Endothelial cell of umbilical vein (primary cell): ENCODE measurements at regions of chr2 and their contacts with region 1.

Region 1: GRCh38 chr2:174667379-174667781 is 69.8 kb upstream of the WIPF1 start:
- DNase-seq: peak; percentile 37
- H3K4me3 ChIP-seq: no peak overlapping the region
- H3K27ac ChIP-seq: no peak overlapping the region
- H3K4me1 ChIP-seq: peaks cover 14% of the 10 kb centered on the region
- H3K27me3 ChIP-seq: no peaks in the 10 kb centered on the region
- CTCF ChIP-seq: no peak
- POLR2A ChIP-seq: no peak

Region 2: DNA sequence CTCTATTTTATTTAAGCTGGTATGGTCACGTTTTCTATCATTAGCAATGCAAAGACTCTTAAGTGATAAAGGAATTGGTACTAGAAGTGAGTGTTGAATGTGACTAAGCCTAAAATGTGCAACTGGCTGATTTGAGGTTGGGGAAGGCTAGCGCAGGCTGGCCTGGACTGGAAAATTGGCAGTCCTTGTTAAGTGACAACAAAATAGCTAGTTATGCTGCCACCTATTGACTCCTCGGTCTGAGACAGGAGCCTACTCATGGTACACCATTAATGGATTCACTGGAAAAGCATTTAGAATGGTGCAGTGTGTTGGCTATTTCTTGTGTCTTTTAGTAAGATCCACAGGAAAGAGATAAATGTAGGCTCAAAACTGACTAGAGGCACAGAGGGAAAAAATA is 64.1 kb before region 1 on chr2:
- CTCF ChIA-PET with region 1: no interaction called
- POLR2A ChIA-PET with region 1: no interaction called
- dilution Hi-C with region 1: no loop called
- intact Hi-C with region 1: no loop called
- DNase-seq: peak; percentile 62
- H3K4me3 ChIP-seq: no peak overlapping the region
- H3K27ac ChIP-seq: no peak overlapping the region
- H3K4me1 ChIP-seq: peaks cover under 1% of the 10 kb centered on the region
- H3K27me3 ChIP-seq: no peaks in the 10 kb centered on the region
- CTCF ChIP-seq: peak; percentile 48 to 56
- POLR2A ChIP-seq: no peak

Region 3: GRCh38 chr2:174624895-174625430 is 42.4 kb before region 1 on chr2:
- CTCF ChIA-PET with region 1: no interaction called
- POLR2A ChIA-PET with region 1: no interaction called
- dilution Hi-C with region 1: no loop called
- intact Hi-C with region 1: loop called (anchors 5 kb)
- DNase-seq: no peak
- H3K4me3 ChIP-seq: no peak overlapping the region
- H3K27ac ChIP-seq: no peak overlapping the region
- H3K4me1 ChIP-seq: no peaks in the 10 kb centered on the region
- H3K27me3 ChIP-seq: no peaks in the 10 kb centered on the region
- CTCF ChIP-seq: no peak
- POLR2A ChIP-seq: no peak

Region 4: DNA sequence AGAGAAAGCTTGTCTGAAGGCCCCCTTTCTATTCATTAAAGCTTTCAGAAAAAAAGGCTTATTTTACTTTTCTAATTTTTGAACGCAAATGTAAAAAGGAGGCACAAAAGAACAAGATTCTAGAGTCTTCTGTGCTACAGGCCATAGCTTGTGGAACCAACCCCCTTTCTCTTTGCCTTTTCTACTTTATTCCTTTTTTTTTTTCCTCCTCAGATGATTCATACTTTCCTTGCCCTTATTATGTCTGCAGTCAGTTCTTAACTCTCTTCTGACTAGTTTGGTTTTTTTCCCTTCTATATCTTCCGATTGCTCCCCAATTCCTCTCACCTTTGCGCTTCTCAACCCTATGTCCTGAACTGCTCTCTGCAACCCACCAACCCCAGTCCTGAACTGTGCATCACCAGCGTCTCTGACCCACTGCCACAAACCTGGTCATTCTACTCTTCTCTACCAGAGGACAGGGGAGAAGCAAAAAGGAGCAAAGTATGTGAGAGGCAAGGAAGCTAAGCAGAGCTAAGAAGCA is 12.9 kb before region 1 on chr2:
- CTCF ChIA-PET with region 1: interaction called, 13 read pairs
- POLR2A ChIA-PET with region 1: no interaction called
- dilution Hi-C with region 1: no loop called
- intact Hi-C with region 1: no loop called
- DNase-seq: peak; percentile 26
- H3K4me3 ChIP-seq: no peak overlapping the region
- H3K27ac ChIP-seq: no peak overlapping the region
- H3K4me1 ChIP-seq: no peaks in the 10 kb centered on the region
- H3K27me3 ChIP-seq: no peaks in the 10 kb centered on the region
- CTCF ChIP-seq: no peak
- POLR2A ChIP-seq: no peak